GM12878 (cell line): ENCODE measurements at regions of chr12 and their contacts with region 1.

Region 1: DNA sequence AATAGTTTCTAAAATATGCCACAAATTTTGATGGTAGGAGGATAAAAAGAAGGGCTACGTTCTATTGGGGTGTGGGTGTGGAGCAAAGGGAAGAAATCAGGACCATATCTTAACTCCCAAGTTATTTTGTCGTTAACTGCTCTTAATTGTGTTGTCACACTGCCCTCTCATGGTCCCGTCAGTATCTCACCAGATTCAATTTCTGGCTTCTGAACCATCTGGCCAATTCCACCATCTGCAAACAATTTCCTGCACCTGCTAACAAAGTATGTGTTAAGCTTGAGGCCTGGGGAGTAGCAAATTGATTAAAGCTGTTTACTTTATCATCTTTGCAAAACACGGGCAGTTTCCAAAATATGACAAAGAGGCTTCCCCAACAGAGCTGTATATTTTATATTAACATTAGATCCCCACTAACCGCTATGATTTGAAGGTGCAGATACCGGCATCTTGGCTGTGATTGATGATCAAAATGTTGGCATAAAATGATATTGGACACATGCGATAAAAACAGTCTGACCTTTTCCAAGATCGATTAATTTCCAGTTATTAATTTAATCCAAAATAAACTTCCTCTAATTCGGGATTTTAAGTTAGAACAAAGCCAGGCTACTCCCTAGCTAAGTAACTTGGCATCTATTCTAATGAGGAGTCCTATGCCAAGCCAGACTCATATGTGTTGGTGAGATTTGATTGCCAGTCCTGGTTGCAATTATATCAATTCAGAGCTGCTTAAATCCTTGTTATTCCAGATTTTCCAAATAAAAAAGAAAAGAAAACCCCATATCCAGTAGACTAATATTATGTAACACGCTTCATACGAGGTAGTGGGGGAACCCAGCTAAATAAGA is 6.9 kb upstream of the DNM1L start:
- DNase-seq: no peak
- ATAC-seq: peak; percentile 74
- H3K4me3 ChIP-seq: no peak overlapping the region
- H3K27ac ChIP-seq: no peak overlapping the region
- H3K4me1 ChIP-seq: peaks cover 10% of the 10 kb centered on the region
- H3K27me3 ChIP-seq: no peaks in the 10 kb centered on the region
- CTCF ChIP-seq: peak; percentile 56 to 76 (median 72); a peak in 5 of 6 replicates
- EP300 ChIP-seq: no peak
- POLR2A ChIP-seq: no peak
- RAD21 ChIP-seq: peak; percentile 87

Region 2: DNA sequence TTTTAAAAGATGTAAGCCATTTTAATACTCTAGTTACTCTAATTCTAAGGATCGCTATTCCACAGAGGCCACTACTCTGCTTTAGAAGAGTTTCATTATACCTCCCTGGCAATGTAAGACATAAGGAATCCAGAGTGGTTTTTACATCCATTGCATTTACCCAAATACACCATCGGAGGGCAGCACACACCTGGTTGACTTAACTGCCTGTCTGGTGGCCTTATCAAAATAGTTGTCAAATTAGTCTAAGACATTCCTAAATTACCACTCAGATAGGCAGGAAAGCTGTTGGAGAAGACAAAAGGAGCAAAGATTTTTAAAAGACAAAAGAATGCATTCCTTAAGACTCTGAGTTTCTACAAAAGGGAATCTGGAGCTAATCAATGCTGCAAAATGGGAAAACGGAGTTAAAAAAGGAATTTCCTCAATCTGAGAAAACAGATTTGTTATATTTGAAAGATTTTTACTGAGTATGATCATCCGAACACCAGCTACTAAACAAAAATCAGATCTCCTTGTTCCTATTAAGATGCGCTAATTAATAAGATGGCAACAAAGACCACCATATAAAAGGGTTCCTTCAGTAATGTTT is 306.6 kb before region 1 on chr12:
- CTCF ChIA-PET with region 1: interaction called, 25 read pairs
- POLR2A ChIA-PET with region 1: interaction called, 3 read pairs
- RAD21 ChIA-PET with region 1: interaction called, 3 read pairs
- SMC1A ChIA-PET with region 1: interaction called, 7 read pairs
- in situ Hi-C with region 1: loop called (anchors 5 kb)
- intact Hi-C with region 1: loop called (anchors 1 kb)
- DNase-seq: peak; percentile 8
- ATAC-seq: peak; percentile 86
- H3K4me3 ChIP-seq: no peak overlapping the region
- H3K27ac ChIP-seq: no peak overlapping the region
- H3K4me1 ChIP-seq: no peaks in the 10 kb centered on the region
- H3K27me3 ChIP-seq: no peaks in the 10 kb centered on the region
- CTCF ChIP-seq: peak; percentile 67 to 83 (median 67)
- EP300 ChIP-seq: no peak
- POLR2A ChIP-seq: no peak
- RAD21 ChIP-seq: peak; percentile 85

Region 3: GRCh38 chr12:32448586-32448985 is 223.6 kb before region 1 on chr12:
- CTCF ChIA-PET with region 1: interaction called, 106 read pairs
- POLR2A ChIA-PET with region 1: no interaction called
- RAD21 ChIA-PET with region 1: interaction called, 5 read pairs
- SMC1A ChIA-PET with region 1: interaction called, 108 read pairs
- in situ Hi-C with region 1: no loop called
- intact Hi-C with region 1: no loop called
- DNase-seq: no peak
- ATAC-seq: peak; percentile 57
- H3K4me3 ChIP-seq: no peak overlapping the region
- H3K27ac ChIP-seq: no peak overlapping the region
- H3K4me1 ChIP-seq: no peaks in the 10 kb centered on the region; the same call in 1 of the 2 replicates
- H3K27me3 ChIP-seq: no peaks in the 10 kb centered on the region
- CTCF ChIP-seq: peak in 2 of 3 experiments; percentile 9 to 25; a peak in 2 of 6 replicates
- EP300 ChIP-seq: no peak
- POLR2A ChIP-seq: no peak
- RAD21 ChIP-seq: no peak

Region 4: GRCh38 chr12:32659908-32660440 is 12.2 kb before region 1 on chr12:
- CTCF ChIA-PET with region 1: interaction called, 27 read pairs
- POLR2A ChIA-PET with region 1: no interaction called
- RAD21 ChIA-PET with region 1: interaction called, 9 read pairs
- SMC1A ChIA-PET with region 1: interaction called, 7 read pairs
- in situ Hi-C with region 1: no loop called
- intact Hi-C with region 1: no loop called
- DNase-seq: no peak
- ATAC-seq: peak; percentile 37; the same call in 2 of the 3 replicates
- H3K4me3 ChIP-seq: no peak overlapping the region
- H3K27ac ChIP-seq: no peak overlapping the region
- H3K4me1 ChIP-seq: no peaks in the 10 kb centered on the region
- H3K27me3 ChIP-seq: no peaks in the 10 kb centered on the region
- CTCF ChIP-seq: no peak
- EP300 ChIP-seq: no peak
- POLR2A ChIP-seq: no peak
- RAD21 ChIP-seq: no peak

Region 5: DNA sequence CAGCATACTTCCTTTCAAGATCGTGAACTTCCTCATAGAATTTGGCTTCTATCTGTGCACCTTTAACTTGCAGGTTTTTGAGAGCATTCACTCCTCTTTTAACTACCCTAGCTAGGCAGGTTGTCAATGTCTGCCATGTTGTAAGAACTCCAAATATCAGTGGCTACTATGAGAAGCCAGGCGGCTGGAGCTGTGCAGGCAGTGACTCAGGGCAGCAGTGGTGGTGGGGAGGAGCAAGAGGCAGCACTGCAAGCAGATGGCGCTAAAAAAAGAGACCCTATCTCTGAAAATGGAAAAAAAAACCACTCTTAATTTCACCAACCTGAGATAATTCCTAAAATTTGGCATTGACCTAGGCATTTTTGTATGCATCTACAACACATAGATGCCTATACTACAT is 55.1 kb after region 1 on chr12:
- CTCF ChIA-PET with region 1: no interaction called
- POLR2A ChIA-PET with region 1: no interaction called
- RAD21 ChIA-PET with region 1: no interaction called
- SMC1A ChIA-PET with region 1: no interaction called
- in situ Hi-C with region 1: no loop called
- intact Hi-C with region 1: no loop called
- DNase-seq: no peak
- ATAC-seq: no peak
- H3K4me3 ChIP-seq: no peak overlapping the region
- H3K27ac ChIP-seq: no peak overlapping the region
- H3K4me1 ChIP-seq: no peaks in the 10 kb centered on the region
- H3K27me3 ChIP-seq: no peaks in the 10 kb centered on the region
- CTCF ChIP-seq: no peak
- EP300 ChIP-seq: no peak
- POLR2A ChIP-seq: no peak
- RAD21 ChIP-seq: no peak